CD4-positive, alpha-beta T cell (primary cell): ENCODE measurements at regions of chr5 and their contacts with region 1.

Region 1: GRCh38 chr5:75511435-75512384 is at the starts of genes CERT1 and POLK:
- DNase-seq: peak; percentile 83 to 98 (median 90)
- ATAC-seq: peak; percentile 88
- H3K4me3 ChIP-seq: peak within 1 kb of the TSS; percentile 92
- H3K4me3 Mint-ChIP-seq: peak within 1 kb of the TSS; percentile 96
- H3K27ac ChIP-seq: peak within 1 kb of the TSS; percentile 78
- H3K27ac Mint-ChIP-seq: peak within 1 kb of the TSS; percentile 99
- H3K4me1 ChIP-seq: peaks cover 17% of the 10 kb centered on the region
- H3K4me1 Mint-ChIP-seq: peaks cover 65% of the 10 kb centered on the region
- H3K27me3 ChIP-seq: no peaks in the 10 kb centered on the region
- H3K27me3 Mint-ChIP-seq: no peaks in the 10 kb centered on the region
- CTCF ChIP-seq: no peak
- total RNA-seq, gene CERT1: 26.5 to 28.7 TPM
- total RNA-seq, gene POLK: 10.0 to 10.3 TPM

Region 2: GRCh38 chr5:74684900-74685851 is 826.5 kb before region 1 on chr5 and contains the start of gene HEXB:
- CTCF ChIA-PET with region 1: no interaction called
- POLR2A ChIA-PET with region 1: no interaction called
- intact Hi-C with region 1: loop called in 1 of 2 experiments (anchors 10 kb)
- DNase-seq: peak; percentile 61 to 92 (median 82)
- ATAC-seq: peak; percentile 88
- H3K4me3 ChIP-seq: peak within 1 kb of the TSS; percentile 99
- H3K4me3 Mint-ChIP-seq: peak within 1 kb of the TSS; percentile 92
- H3K27ac ChIP-seq: peak within 1 kb of the TSS; percentile 52 to 63
- H3K27ac Mint-ChIP-seq: peak within 1 kb of the TSS; percentile 72
- H3K4me1 ChIP-seq: peaks cover 27% of the 10 kb centered on the region
- H3K4me1 Mint-ChIP-seq: peaks cover 22% of the 10 kb centered on the region
- H3K27me3 ChIP-seq: no peaks in the 10 kb centered on the region
- H3K27me3 Mint-ChIP-seq: no peaks in the 10 kb centered on the region
- CTCF ChIP-seq: no peak
- total RNA-seq, gene HEXB: 31.9 to 33.8 TPM

Region 3: GRCh38 chr5:75236322-75237316 is 275.1 kb before region 1 on chr5 and contains the start of gene ANKRD31:
- CTCF ChIA-PET with region 1: no interaction called
- POLR2A ChIA-PET with region 1: interaction called, 11 read pairs
- intact Hi-C with region 1: loop called (anchors 2 to 5 kb)
- DNase-seq: peak; percentile 80 to 97 (median 90)
- ATAC-seq: peak; percentile 98
- H3K4me3 ChIP-seq: peak within 1 kb of the TSS; percentile 76
- H3K4me3 Mint-ChIP-seq: peak within 1 kb of the TSS; percentile 96
- H3K27ac ChIP-seq: peak within 1 kb of the TSS; percentile 58 to 79
- H3K27ac Mint-ChIP-seq: peak within 1 kb of the TSS; percentile 94
- H3K4me1 ChIP-seq: peaks cover 13% of the 10 kb centered on the region
- H3K4me1 Mint-ChIP-seq: peaks cover 19% of the 10 kb centered on the region
- H3K27me3 ChIP-seq: no peaks in the 10 kb centered on the region
- H3K27me3 Mint-ChIP-seq: no peaks in the 10 kb centered on the region
- CTCF ChIP-seq: peak; percentile 80
- total RNA-seq, gene ANKRD31: 0.55 to 0.56 TPM

Region 4: DNA sequence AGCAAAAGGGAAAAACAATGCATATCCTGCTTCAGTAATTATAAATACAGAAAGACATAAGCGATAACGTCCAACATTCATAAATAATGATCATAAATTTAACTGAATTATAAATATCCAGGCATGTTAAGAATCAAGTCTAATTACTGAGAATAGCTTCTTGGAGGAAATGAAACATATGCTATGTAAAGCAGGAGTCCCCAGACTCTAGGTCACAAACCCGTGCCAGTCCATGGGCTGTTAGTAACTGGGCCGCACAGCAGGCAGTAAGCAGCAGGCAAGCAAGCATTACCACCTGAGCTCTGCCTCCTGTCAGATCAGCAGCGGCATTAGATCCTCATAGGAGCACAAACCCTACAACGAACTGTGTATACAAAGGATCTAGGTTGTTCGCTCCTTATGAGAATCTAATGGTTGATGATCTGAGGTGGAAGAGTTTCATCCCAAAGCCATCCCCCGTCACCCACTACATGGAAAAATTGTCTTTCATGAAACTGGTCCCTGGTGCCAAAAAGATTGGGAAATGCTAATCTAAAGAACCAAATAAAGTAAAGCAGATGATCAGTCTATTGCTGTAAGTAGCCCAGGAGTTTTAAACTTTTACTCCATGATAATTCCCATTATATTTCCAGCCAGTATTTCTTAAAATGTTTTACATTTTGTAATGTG is 50.6 kb before region 1 on chr5:
- CTCF ChIA-PET with region 1: no interaction called
- POLR2A ChIA-PET with region 1: no interaction called
- intact Hi-C with region 1: no loop called
- DNase-seq: no peak
- ATAC-seq: no peak
- H3K4me3 ChIP-seq: no peak overlapping the region
- H3K4me3 Mint-ChIP-seq: no peak overlapping the region
- H3K27ac ChIP-seq: no peak overlapping the region
- H3K27ac Mint-ChIP-seq: no peak overlapping the region
- H3K4me1 ChIP-seq: peaks cover 13% of the 10 kb centered on the region
- H3K4me1 Mint-ChIP-seq: peaks cover 51% of the 10 kb centered on the region
- H3K27me3 ChIP-seq: no peaks in the 10 kb centered on the region
- H3K27me3 Mint-ChIP-seq: no peaks in the 10 kb centered on the region
- CTCF ChIP-seq: no peak

Region 5: GRCh38 chr5:75668977-75669689 is 157.4 kb after region 1 on chr5:
- CTCF ChIA-PET with region 1: no interaction called
- POLR2A ChIA-PET with region 1: no interaction called
- intact Hi-C with region 1: no loop called
- DNase-seq: peak in 11 of 14 experiments; percentile 5 to 68 (median 15)
- ATAC-seq: peak; percentile 54
- H3K4me3 ChIP-seq: peak overlapping the region; percentile 56
- H3K4me3 Mint-ChIP-seq: peak overlapping the region; percentile 82
- H3K27ac ChIP-seq: peak overlapping the region in 1 of 2 donors; percentile 32
- H3K27ac Mint-ChIP-seq: peak overlapping the region; percentile 60
- H3K4me1 ChIP-seq: peaks cover 12% of the 10 kb centered on the region
- H3K4me1 Mint-ChIP-seq: peaks cover 14% of the 10 kb centered on the region
- H3K27me3 ChIP-seq: no peaks in the 10 kb centered on the region
- H3K27me3 Mint-ChIP-seq: no peaks in the 10 kb centered on the region
- CTCF ChIP-seq: no peak

Region 6: DNA sequence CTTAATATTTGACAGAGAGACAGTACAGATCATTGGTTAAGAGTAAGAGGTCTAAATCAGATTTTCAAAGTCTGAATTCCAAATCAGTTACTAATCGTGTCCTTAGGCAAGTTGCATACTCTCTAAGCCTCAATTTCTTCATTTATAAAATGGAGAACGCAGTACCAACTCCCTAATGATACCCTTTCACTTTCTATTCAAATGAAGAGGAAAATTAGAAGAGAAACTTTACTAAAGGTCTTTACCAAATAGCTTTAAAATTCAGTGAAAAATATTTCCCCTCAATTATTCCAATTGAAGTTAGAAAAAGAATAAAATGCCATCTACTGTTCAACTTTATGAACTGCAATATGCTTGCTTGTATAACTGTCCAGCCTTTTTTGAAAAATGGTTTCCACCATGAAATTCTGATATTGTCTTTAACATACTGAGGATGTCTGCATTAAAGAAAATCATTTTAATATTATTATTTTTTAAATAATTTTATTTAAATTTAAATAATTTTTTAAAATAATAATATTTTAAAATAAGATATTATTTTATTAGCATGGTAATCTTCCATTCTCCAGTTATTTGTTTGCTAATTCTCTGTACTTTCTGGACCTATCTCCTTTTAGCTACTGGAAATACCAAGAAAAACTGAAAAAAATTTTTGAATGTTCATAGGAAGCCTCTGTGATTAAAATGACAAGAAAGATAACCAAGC is 169.6 kb after region 1 on chr5:
- CTCF ChIA-PET with region 1: no interaction called
- POLR2A ChIA-PET with region 1: no interaction called
- intact Hi-C with region 1: loop called in 1 of 2 experiments (anchors 10 kb)
- DNase-seq: peak in 3 of 14 experiments; percentile 58 to 61 (median 59)
- ATAC-seq: peak; percentile 38
- H3K4me3 ChIP-seq: no peak overlapping the region
- H3K4me3 Mint-ChIP-seq: no peak overlapping the region
- H3K27ac ChIP-seq: no peak overlapping the region
- H3K27ac Mint-ChIP-seq: no peak overlapping the region
- H3K4me1 ChIP-seq: no peaks in the 10 kb centered on the region
- H3K4me1 Mint-ChIP-seq: peaks cover 11% of the 10 kb centered on the region
- H3K27me3 ChIP-seq: no peaks in the 10 kb centered on the region
- H3K27me3 Mint-ChIP-seq: no peaks in the 10 kb centered on the region
- CTCF ChIP-seq: peak; percentile 82

Region 7: DNA sequence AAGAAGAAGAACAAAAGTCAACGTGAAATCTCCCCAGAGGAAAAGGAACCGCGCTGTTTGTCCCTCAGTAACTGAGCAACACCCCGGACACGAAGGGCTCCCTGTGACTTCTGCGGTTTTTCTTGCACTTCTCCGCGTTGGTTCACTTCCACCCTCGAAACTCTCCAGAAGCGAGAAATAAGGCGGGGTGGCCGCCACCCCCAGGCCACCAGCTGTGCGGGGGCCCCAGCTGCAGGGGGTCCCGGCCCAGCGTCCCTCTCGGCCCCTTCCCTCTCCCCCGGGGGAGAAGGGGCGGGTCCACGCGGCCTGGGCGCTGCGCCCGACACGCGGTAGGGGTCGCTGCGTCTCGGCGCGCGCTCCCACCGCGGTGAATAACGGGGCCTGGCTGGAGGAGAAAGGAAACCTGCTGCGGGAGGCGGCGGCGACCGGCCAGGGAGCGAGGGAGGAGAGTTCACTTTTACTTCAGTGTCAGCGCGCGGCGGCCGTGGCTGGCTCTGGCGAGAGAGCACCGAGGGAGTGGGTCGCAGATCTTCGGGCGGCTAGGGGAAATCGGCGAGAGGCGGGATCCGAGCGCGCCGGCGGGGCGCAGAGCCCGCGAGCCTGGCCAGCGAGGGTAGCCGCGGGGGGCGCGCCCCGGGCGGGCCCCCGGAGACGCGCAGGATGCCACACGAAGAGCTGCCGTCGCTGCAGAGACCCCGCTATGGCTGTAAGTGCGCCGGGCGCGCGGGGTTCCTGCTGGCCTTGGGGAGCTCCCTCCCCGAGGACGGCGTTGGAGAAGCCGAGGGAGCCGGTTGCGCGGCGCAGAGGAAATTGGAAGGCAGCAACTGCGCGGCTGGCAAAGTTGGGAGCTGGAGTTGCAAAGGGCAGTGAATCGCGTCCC is 891.4 kb after region 1 on chr5 and contains the start of gene IQGAP2:
- CTCF ChIA-PET with region 1: no interaction called
- POLR2A ChIA-PET with region 1: no interaction called
- intact Hi-C with region 1: loop called in 1 of 2 experiments (anchors 10 kb)
- DNase-seq: peak; percentile 64 to 95 (median 81)
- ATAC-seq: peak; percentile 58
- H3K4me3 ChIP-seq: peak within 1 kb of the TSS; percentile 96
- H3K4me3 Mint-ChIP-seq: peak within 1 kb of the TSS; percentile 92
- H3K27ac ChIP-seq: peak within 1 kb of the TSS; percentile 90 to 93
- H3K27ac Mint-ChIP-seq: peak within 1 kb of the TSS; percentile 94
- H3K4me1 ChIP-seq: peaks cover 45% of the 10 kb centered on the region
- H3K4me1 Mint-ChIP-seq: peaks cover 67% of the 10 kb centered on the region
- H3K27me3 ChIP-seq: no peaks in the 10 kb centered on the region
- H3K27me3 Mint-ChIP-seq: no peaks in the 10 kb centered on the region
- CTCF ChIP-seq: peak; percentile 78
- total RNA-seq, gene IQGAP2: 58.8 TPM

Region 8: GRCh38 chr5:77282337-77283027 is 1770.8 kb after region 1 on chr5:
- CTCF ChIA-PET with region 1: no interaction called
- POLR2A ChIA-PET with region 1: no interaction called
- intact Hi-C with region 1: no loop called
- DNase-seq: no peak
- ATAC-seq: no peak
- H3K4me3 ChIP-seq: no peak overlapping the region
- H3K4me3 Mint-ChIP-seq: no peak overlapping the region
- H3K27ac ChIP-seq: no peak overlapping the region
- H3K27ac Mint-ChIP-seq: no peak overlapping the region
- H3K4me1 ChIP-seq: no peaks in the 10 kb centered on the region
- H3K4me1 Mint-ChIP-seq: peaks cover 8% of the 10 kb centered on the region
- H3K27me3 ChIP-seq: no peaks in the 10 kb centered on the region
- H3K27me3 Mint-ChIP-seq: no peaks in the 10 kb centered on the region
- CTCF ChIP-seq: no peak